ENCODE measurements at regions of chr10 and their contacts with region 1.

Region 1: GRCh38 chr10:105981679-105982078 is 1182.8 kb downstream of the SORCS1 start:
- DNase-seq: no peak
- H3K4me3 ChIP-seq: no peak overlapping the region
- H3K27ac ChIP-seq: no peak overlapping the region
- H3K4me1 ChIP-seq: no peaks in the 10 kb centered on the region
- H3K27me3 ChIP-seq: no peaks in the 10 kb centered on the region
- CTCF ChIP-seq: no peak
- POLR2A ChIP-seq: no peak

Region 2: GRCh38 chr10:104906112-104906511 is 1075.6 kb before region 1 on chr10:
- intact Hi-C with region 1: no loop called
- DNase-seq: no peak
- H3K4me3 ChIP-seq: no peak overlapping the region
- H3K27ac ChIP-seq: no peak overlapping the region
- H3K4me1 ChIP-seq: no peaks in the 10 kb centered on the region
- H3K27me3 ChIP-seq: peaks cover 0 to 10% of the 10 kb centered on the region in 2 donors
- CTCF ChIP-seq: no peak
- POLR2A ChIP-seq: no peak

Region 3: GRCh38 chr10:105358911-105359310 is 622.8 kb before region 1 on chr10:
- intact Hi-C with region 1: no loop called
- DNase-seq: no peak
- H3K4me3 ChIP-seq: no peak overlapping the region
- H3K27ac ChIP-seq: no peak overlapping the region
- H3K4me1 ChIP-seq: no peaks in the 10 kb centered on the region
- H3K27me3 ChIP-seq: no peaks in the 10 kb centered on the region
- CTCF ChIP-seq: no peak
- POLR2A ChIP-seq: no peak

Region 4: GRCh38 chr10:106043863-106044262 is 62.2 kb after region 1 on chr10:
- intact Hi-C with region 1: loop called (anchors 2 kb)
- DNase-seq: no peak
- H3K4me3 ChIP-seq: no peak overlapping the region
- H3K27ac ChIP-seq: no peak overlapping the region
- H3K4me1 ChIP-seq: no peaks in the 10 kb centered on the region
- H3K27me3 ChIP-seq: no peaks in the 10 kb centered on the region
- CTCF ChIP-seq: no peak
- POLR2A ChIP-seq: no peak

Measured in breast epithelium (tissue), 4 donors.